Mammary epithelial cell (primary cell): ENCODE measurements at regions of chr17 and their contacts with region 1.

Region 1: DNA sequence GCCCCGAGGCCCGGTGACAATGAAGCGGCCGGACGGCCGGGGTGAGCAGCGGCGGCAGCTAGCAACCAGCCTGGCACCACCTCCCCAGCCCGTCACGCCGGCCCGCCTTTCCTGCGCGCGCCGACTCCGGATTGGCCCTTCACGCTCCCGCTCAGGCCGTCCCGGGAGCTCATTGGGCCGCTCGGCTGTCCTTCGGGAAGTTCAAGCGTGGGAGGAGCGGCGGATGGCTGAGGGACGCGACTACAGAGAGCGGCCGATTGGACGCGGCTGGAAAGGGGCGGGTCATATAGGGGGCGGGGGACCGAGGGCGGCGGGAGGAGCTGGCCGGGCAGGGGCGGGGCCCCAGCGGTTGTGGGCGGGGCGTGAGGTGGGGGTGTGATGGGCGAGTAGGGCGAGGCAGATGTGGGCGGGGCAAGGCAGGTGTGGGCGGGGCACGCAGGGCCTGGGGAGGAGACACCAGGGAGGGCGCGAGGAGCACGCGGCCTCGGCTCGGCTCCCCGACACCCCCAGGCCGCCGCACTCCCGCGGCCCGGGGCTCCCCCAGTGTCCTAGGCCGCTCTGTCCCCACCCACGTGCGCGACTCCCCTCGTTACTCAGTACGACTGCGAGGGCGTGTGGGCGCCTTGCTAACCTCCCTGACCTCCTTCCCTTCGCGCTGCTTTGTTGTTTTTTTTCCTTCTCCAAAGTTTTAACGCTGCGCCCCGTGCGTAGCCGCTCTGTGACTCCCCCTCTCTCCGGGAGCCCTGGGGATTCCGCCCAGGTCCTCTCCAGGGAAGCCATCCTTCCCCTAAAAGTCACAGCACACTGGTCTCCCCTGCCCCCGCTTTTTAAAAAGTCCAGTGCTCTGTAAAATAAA is at the start of gene CEP131:
- DNase-seq: peak; percentile 98
- H3K4me3 ChIP-seq: peak within 1 kb of the TSS; percentile 79 to 84 (median 83)
- H3K27ac ChIP-seq: peak within 1 kb of the TSS; percentile 31
- H3K4me1 ChIP-seq: peaks cover 26% of the 10 kb centered on the region
- H3K27me3 ChIP-seq: no peaks in the 10 kb centered on the region
- CTCF ChIP-seq: no peak
- total RNA-seq, gene CEP131: 8.7 to 13.1 TPM

Region 2: DNA sequence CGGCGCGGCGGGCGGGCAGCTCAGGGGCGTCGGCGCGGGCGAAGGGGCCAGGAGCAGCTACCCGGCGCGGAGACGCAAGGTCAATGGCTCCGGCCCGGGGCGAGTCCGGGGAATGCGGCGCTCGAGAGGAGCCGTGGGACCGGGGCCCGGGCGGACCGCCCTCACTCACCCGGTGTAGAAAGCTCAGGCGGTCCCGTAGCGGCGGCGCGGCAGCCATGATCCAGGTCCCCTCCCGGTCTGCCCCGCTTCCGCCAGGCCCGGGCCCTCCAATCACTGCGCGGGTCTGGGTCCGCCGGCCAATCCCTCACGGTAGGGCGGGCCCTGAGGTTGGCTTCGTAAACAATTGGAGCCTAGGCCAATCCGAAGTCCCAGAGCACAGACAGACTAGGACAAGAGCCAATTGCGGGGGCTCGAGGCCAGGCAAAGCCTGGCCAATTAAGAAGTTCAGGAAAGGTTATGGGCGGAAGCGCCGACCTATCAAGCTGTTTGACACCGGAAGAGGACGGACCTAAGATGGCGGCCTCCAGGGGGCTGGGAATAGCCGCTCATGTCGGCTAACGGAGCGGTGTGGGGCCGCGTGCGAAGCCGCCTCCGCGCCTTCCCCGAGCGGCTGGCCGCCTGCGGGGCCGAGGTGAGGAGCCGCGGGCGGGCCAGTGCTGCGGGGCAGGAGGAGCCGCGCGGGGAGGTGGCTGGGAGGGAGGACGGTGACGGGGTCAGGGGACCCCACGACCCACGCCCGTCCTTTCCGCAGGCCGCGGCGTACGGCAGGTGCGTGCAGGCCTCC is 15.9 kb after region 1 on chr17 and contains the starts of genes NDUFAF8 and TEPSIN:
- CTCF ChIA-PET with region 1: no interaction called
- dilution Hi-C with region 1: no loop called
- in situ Hi-C with region 1: no loop called
- intact Hi-C with region 1: loop called (anchors 1 kb)
- DNase-seq: peak; percentile 100
- H3K4me3 ChIP-seq: peak within 1 kb of the TSS; percentile 71 to 94 (median 91)
- H3K27ac ChIP-seq: peak within 1 kb of the TSS; percentile 75
- H3K4me1 ChIP-seq: peaks cover 19% of the 10 kb centered on the region
- H3K27me3 ChIP-seq: no peaks in the 10 kb centered on the region
- CTCF ChIP-seq: no peak
- total RNA-seq, gene NDUFAF8: 14.7 to 98.1 TPM
- total RNA-seq, gene TEPSIN: 15.7 to 25.7 TPM

Region 3: GRCh38 chr17:81285179-81285878 is 62.2 kb after region 1 on chr17:
- CTCF ChIA-PET with region 1: no interaction called
- dilution Hi-C with region 1: loop called (anchors 10 kb)
- in situ Hi-C with region 1: no loop called
- intact Hi-C with region 1: no loop called
- DNase-seq: no peak
- H3K4me3 ChIP-seq: no peak overlapping the region
- H3K27ac ChIP-seq: no peak overlapping the region
- H3K4me1 ChIP-seq: no peaks in the 10 kb centered on the region
- H3K27me3 ChIP-seq: no peaks in the 10 kb centered on the region
- CTCF ChIP-seq: no peak